Left lung (tissue), 14 donors: ENCODE measurements at regions of chr4 and their contacts with region 1.

Region 1: DNA sequence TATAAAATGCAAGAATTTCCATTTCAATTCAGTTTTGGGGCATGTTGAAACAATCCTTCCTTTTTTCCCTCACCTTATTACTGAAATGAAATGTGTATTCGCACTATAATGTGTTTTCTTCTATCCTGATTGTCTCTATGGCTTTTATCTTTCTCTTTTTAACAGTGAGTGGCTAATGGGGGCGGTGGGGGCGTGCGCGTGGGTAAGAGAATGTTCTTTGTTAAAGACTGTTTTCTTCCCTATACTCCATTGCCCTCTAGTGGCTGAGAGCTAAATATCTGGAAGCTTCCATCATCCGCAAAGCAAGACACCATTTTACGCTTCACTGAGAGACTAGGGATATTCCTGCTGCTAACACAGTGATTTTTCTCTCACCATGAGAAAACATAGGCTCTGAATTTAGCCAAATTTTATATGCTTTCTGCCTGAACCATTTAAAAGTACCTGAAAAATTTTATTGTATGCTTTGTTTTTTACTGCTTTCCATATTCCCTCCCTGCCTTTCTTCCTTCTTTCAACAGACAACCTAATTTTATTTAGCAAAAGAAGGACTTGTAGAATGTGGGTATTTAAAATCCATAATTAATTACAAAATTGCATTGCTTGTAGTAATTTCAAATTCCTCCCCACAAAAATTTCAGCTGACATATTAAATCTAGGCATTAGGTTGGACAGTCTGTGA is 194.0 kb downstream of the GASK1B start:
- DNase-seq: peak in 2 of 4 donors; percentile 55 to 70
- ATAC-seq: peak; percentile 90
- H3K4me3 ChIP-seq: no peak overlapping the region
- H3K27ac ChIP-seq: no peak overlapping the region
- H3K4me1 ChIP-seq: peaks cover 0 to 3% of the 10 kb centered on the region in 2 donors
- H3K27me3 ChIP-seq: peaks cover 0 to 6% of the 10 kb centered on the region in 2 donors
- CTCF ChIP-seq: peak; percentile 68 to 78

Region 2: GRCh38 chr4:157217708-157218107 is 761.1 kb before region 1 on chr4:
- intact Hi-C with region 1: loop called in 1 of 2 experiments (anchors 10 kb)
- DNase-seq: peak in 1 of 4 donors; percentile 8
- ATAC-seq: no peak
- H3K4me3 ChIP-seq: no peak overlapping the region
- H3K27ac ChIP-seq: no peak overlapping the region
- H3K4me1 ChIP-seq: no peaks in the 10 kb centered on the region
- H3K27me3 ChIP-seq: peaks cover 31 to 39% of the 10 kb centered on the region in 2 donors
- CTCF ChIP-seq: no peak

Region 3: GRCh38 chr4:158065176-158065575 is 86.4 kb after region 1 on chr4:
- intact Hi-C with region 1: no loop called
- DNase-seq: no peak
- ATAC-seq: no peak
- H3K4me3 ChIP-seq: no peak overlapping the region
- H3K27ac ChIP-seq: no peak overlapping the region
- H3K4me1 ChIP-seq: no peaks in the 10 kb centered on the region
- H3K27me3 ChIP-seq: no peaks in the 10 kb centered on the region
- CTCF ChIP-seq: no peak